Tibial artery (tissue), 4 donors: ENCODE measurements at regions of chr1 and their contacts with region 1.

Region 1: DNA sequence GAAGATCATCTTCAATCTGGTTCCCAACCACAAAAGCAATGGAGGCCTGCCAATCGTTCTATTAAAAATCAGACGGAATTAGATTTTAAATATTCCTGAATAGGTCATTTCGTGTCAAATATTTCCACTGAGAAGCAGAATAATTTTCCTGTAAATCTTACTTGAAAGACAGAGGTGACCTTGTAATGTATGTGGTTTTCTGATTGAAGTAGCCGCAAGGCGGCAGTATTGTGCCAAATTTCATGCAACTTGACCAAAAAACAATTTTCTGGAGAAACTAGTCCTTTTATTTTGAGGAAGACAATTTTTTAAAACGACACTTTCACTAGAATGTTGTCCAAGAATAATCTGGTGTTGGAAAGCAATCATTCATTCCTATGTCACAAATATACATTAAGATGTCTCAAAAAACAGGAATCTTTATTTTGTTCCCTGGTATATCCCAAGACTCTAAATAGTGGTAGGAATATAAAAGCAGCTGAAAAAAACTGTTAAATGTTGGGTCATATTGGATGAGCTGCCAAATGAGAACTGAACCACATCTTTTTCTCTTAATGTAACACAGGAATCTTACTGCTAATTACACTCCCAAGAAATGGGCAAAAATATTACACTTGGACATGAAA is 33.6 kb downstream of the SPAG17 start:
- DNase-seq: peak in 1 of 2 donors; percentile 64
- H3K4me3 ChIP-seq: no peak overlapping the region
- H3K27ac ChIP-seq: no peak overlapping the region
- H3K4me1 ChIP-seq: no peaks in the 10 kb centered on the region
- H3K27me3 ChIP-seq: no peaks in the 10 kb centered on the region
- CTCF ChIP-seq: peak; percentile 55 to 60

Region 2: DNA sequence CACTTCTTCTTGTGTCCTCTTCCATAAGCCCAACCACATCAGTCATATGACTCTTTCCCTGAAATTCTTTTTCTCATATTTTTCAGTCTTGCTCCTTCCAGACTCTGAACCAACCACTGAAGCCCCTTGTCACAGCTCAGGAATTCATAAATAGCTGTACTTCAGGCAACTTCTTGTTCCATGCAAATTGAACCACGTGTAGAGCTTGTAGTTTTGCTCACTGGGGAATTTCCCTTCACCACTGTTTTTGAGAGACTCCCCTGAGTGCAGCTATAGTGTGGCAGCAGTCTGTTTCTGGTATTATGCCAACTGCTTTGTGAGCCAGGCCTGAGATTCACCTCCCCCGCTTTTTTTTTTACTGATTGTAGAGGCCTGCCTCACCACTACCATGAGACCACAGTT is 183.9 kb after region 1 on chr1:
- intact Hi-C with region 1: no loop called
- DNase-seq: no peak
- H3K4me3 ChIP-seq: no peak overlapping the region
- H3K27ac ChIP-seq: no peak overlapping the region
- H3K4me1 ChIP-seq: peaks cover 0 to 23% (median 7%) of the 10 kb centered on the region in 4 donors
- H3K27me3 ChIP-seq: no peaks in the 10 kb centered on the region
- CTCF ChIP-seq: no peak

Region 3: DNA sequence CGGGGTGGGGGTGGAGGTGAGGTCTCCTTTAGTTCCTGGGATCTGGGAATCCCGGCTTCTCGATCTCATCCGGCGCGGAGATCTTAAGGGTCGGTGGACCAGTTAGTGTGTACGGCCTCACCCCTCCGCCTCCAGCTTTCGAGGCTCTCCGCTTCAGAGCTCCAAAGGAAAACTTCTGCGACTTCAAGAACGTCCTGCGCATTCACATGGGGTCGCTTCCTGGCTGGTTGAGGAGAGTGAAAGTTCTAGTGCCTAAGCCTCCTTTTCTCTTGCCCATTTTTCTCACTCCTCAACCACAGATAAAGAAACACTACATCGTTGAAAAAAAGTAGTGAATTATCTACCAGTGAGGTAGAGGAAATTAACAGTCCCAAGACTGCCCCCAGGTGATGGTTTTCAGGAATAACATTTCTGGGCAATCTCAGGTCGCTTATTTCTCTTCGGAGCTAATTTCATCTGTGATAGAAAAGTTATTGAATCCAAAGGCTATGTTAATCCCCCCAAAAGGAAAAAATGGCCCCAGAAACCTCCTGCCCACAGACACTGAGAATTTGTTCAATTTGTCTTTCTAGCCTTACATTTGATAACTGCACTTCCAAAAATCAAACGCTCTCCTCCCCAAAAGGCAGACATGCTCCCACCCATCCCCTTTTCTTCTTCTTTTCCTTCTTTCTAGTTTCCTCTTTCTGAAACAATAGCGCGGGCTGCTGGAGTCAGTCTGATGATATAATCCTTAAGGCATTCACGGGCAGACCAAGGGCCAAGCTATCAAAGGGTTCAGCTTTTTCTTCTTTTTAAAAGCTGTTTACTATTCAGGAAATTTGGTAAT is 857.3 kb after region 1 on chr1:
- intact Hi-C with region 1: loop called (anchors 5 kb)
- DNase-seq: peak in 1 of 2 donors; percentile 67
- H3K4me3 ChIP-seq: peak overlapping the region; percentile 27 to 46
- H3K27ac ChIP-seq: peak overlapping the region in 1 of 2 donors; percentile 20
- H3K4me1 ChIP-seq: peaks cover 3 to 28% (median 11%) of the 10 kb centered on the region in 4 donors
- H3K27me3 ChIP-seq: peaks cover 4 to 27% of the 10 kb centered on the region in 2 donors
- CTCF ChIP-seq: peak; percentile 71 to 76